ENCODE measurements at regions of chr18 and their contacts with region 1.

Region 1: GRCh38 chr18:53380063-53380639 is 844.3 kb downstream of the MBD2 start:
- DNase-seq: peak; percentile 19
- ATAC-seq: no peak; the same call in 1 of the 2 replicates
- H3K4me3 ChIP-seq: no peak overlapping the region
- H3K27ac ChIP-seq: no peak overlapping the region
- H3K4me1 ChIP-seq: no peaks in the 10 kb centered on the region
- H3K27me3 ChIP-seq: no peaks in the 10 kb centered on the region
- CTCF ChIP-seq: peak in 2 of 3 experiments; percentile 35 to 54; a peak in 3 of 6 replicates
- POLR2A ChIP-seq: no peak
- RAD21 ChIP-seq: 0 out of 2 replicates have a peak, but pooled peaks have one; percentile 5

Region 2: DNA sequence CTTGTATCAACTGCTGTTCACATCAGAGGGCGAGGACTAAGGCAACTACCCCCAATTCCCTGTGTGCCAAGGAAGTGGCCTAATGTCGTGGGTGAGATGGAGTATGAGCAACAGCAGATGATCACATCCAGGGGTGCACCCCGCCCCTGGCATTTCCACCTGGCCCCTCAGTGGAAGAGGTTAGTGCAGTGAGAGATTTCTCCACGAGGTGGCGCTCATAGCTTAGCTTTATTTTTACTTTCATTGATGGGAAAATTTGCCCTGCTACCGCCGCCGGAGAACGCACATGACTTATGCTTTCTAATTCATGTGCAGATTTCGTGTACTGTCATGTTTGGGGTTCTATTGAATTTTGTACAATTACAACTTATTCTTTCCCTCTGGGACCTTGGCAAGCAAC is 1712.0 kb before region 1 on chr18:
- CTCF ChIA-PET with region 1: no interaction called
- POLR2A ChIA-PET with region 1: no interaction called
- RAD21 ChIA-PET with region 1: no interaction called
- intact Hi-C with region 1: loop called (anchors 10 kb)
- DNase-seq: peak; percentile 8
- ATAC-seq: peak; percentile 54
- H3K4me3 ChIP-seq: no peak overlapping the region
- H3K27ac ChIP-seq: no peak overlapping the region
- H3K4me1 ChIP-seq: no peaks in the 10 kb centered on the region
- H3K27me3 ChIP-seq: no peaks in the 10 kb centered on the region
- CTCF ChIP-seq: peak; percentile 7 to 72 (median 58); a peak in 4 of 6 replicates
- POLR2A ChIP-seq: no peak
- RAD21 ChIP-seq: peak; percentile 54

Measured in HCT116 (cell line).